AG04449 (cell line): ENCODE measurements at regions of chr3 and their contacts with region 1.

Region 1: DNA sequence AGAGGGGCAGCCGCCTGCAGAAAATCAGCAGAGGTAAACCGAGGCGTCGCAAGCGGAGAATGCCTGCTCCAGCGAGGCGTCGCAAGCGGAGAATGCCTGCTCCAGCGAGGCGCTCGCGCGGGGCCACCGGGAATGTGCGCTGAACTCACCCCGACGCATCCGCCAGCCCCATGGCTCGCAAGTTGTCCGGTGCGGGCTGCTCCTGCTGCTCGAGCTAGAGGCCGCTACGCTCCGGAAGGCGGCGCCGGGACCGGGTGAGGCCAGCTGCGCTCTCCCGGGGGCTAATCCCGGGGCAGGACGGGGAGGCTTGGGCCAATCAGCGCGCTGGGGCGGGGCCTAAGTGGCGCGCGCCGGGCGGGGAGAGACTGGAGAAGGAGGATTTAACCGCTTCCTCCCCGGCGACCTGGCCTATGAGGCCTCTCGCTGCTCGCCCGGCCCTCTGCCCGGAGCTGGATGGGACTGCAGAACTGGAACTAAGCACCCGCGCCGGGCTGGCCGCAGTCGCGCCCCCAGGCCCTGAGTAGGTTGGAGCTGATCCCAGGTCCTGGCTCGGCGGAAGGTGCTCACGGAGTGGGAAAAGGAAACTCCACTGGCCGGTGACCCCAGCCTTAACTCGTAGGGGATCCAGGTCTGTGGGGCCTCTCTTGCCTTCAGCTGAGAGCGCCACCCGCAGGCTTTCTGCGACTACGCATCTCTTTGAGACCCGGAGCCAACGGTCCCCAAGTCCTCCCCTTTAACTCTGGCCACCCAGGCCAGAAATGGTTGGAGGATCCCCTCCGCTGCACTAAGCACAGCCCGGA is at the start of gene SLC26A6:
- DNase-seq: peak; percentile 56
- H3K4me3 ChIP-seq: peak within 1 kb of the TSS; percentile 84
- CTCF ChIP-seq: peak; percentile 67

Region 2: GRCh38 chr3:48609088-48610005 is 26.1 kb before region 1 on chr3 and contains the start of gene UQCRC1:
- CTCF ChIA-PET with region 1: interaction called, 15 read pairs
- POLR2A ChIA-PET with region 1: interaction called, 4 read pairs
- DNase-seq: no peak
- H3K4me3 ChIP-seq: peak within 1 kb of the TSS; percentile 99
- CTCF ChIP-seq: peak; percentile 93

Region 3: GRCh38 chr3:48650723-48651122 is 15.3 kb after region 1 on chr3:
- CTCF ChIA-PET with region 1: interaction called, 50 read pairs
- POLR2A ChIA-PET with region 1: no interaction called
- DNase-seq: no peak
- H3K4me3 ChIP-seq: no peak overlapping the region
- CTCF ChIP-seq: no peak

Region 4: GRCh38 chr3:48674505-48674904 is 39.1 kb after region 1 on chr3:
- CTCF ChIA-PET with region 1: interaction called, 12 read pairs
- POLR2A ChIA-PET with region 1: no interaction called
- DNase-seq: no peak
- H3K4me3 ChIP-seq: no peak overlapping the region
- CTCF ChIP-seq: no peak

Region 5: GRCh38 chr3:48739955-48740823 is 104.8 kb after region 1 on chr3:
- CTCF ChIA-PET with region 1: interaction called, 15 read pairs
- POLR2A ChIA-PET with region 1: no interaction called
- DNase-seq: no peak
- H3K4me3 ChIP-seq: no peak overlapping the region
- CTCF ChIP-seq: peak; percentile 92